AG04450 (cell line): ENCODE measurements at regions of chr22 and their contacts with region 1.

Region 1: GRCh38 chr22:46122511-46122971 is 27.8 kb upstream of the PPARA start:
- DNase-seq: no peak
- H3K4me3 ChIP-seq: no peak overlapping the region
- H3K27ac ChIP-seq: no peak overlapping the region
- H3K27me3 ChIP-seq: no peaks in the 10 kb centered on the region
- CTCF ChIP-seq: peak; percentile 80

Region 2: GRCh38 chr22:46088541-46089311 is 33.8 kb before region 1 on chr22:
- CTCF ChIA-PET with region 1: no interaction called
- POLR2A ChIA-PET with region 1: no interaction called
- DNase-seq: no peak
- H3K4me3 ChIP-seq: no peak overlapping the region
- H3K27ac ChIP-seq: peak overlapping the region; percentile 94
- H3K27me3 ChIP-seq: no peaks in the 10 kb centered on the region
- CTCF ChIP-seq: no peak

Region 3: DNA sequence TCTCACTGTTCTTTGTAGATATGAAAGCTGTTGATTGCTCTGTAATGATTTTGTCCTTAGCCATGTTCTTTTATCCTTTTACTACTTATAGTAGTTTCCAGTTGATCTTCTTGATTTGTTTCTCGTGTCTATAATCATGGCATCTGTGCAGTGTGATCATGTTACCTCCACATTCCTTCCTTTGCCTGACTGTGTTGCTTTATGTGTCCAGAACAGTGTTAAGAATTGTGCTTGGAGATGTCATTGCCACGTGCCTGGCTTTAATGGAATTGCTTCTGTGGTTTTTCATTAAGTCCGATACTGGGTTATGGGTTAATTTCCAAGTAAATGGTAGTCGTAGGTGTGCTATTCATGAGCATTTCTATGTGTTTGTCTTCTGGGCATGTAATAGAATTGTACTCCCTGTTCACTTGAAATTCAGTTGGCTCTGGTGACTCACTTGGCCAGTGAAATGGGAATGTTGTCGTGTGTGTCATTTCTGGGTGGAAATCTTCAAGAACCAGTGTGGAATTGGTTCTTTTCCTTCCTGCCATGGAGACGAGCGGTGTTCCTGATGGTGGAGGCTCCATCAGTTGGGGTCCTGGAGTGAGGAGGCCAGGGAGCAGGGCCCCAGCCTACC is 180.9 kb after region 1 on chr22:
- CTCF ChIA-PET with region 1: interaction called, 12 read pairs
- POLR2A ChIA-PET with region 1: no interaction called
- DNase-seq: no peak
- H3K4me3 ChIP-seq: no peak overlapping the region
- H3K27ac ChIP-seq: peak overlapping the region; percentile 39
- H3K27me3 ChIP-seq: no peaks in the 10 kb centered on the region
- CTCF ChIP-seq: no peak

Region 4: GRCh38 chr22:46317646-46318045 is 195.1 kb after region 1 on chr22:
- CTCF ChIA-PET with region 1: interaction called, 47 read pairs
- POLR2A ChIA-PET with region 1: no interaction called
- DNase-seq: no peak
- H3K4me3 ChIP-seq: no peak overlapping the region
- H3K27ac ChIP-seq: no peak overlapping the region
- H3K27me3 ChIP-seq: no peaks in the 10 kb centered on the region
- CTCF ChIP-seq: no peak

Region 5: DNA sequence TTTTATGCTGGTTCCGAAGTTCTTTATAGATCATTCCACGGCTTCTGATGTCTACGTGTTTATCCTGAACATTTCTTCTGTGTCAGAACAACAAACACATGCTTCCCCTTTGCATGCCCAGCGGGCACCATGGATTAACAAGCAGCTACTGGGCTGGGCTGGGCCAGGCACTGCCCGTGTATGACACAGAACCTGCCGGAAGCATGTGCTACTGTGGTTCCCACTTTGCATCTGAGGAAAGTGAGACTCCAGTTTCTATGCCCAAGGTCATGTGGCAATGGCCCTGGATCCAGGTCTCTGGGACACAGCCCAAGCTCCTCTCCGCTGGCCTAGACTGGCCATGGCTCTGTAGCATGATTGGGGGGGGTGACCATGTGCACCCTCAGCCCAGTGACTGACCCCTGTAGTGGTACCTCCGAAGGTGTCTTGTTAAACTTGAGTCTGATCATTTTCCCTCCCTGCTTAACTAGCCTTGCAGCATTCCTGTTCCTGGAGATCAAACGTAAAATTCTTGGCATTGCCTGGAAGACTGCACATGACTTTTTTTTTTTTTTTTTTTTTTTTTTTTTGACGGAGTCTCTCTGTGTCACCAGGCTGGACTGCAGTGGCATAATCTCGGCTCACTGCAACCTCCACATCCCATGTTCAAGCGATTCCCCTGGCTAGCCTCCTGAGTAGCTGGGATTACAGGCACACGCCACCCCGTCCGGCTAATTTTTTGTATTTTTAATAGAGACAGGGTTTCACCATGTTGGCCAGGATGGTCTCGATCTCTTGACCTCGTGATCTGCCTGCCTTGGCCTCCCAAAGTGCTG is 1755.9 kb after region 1 on chr22:
- CTCF ChIA-PET with region 1: no interaction called
- POLR2A ChIA-PET with region 1: no interaction called
- DNase-seq: no peak
- H3K4me3 ChIP-seq: no peak overlapping the region
- H3K27ac ChIP-seq: no peak overlapping the region
- H3K27me3 ChIP-seq: no peaks in the 10 kb centered on the region
- CTCF ChIP-seq: no peak